ENCODE measurements at regions of chr7 and their contacts with region 1.

Region 1: GRCh38 chr7:44082541-44083207 is 344 bp upstream of the POLM start:
- DNase-seq: peak; percentile 94 to 99 (median 98)
- ATAC-seq: peak; percentile 93
- H3K4me3 ChIP-seq: peak overlapping the region; percentile 66
- H3K4me3 Mint-ChIP-seq: peak overlapping the region; percentile 95
- H3K27ac ChIP-seq: peak overlapping the region; percentile 37 to 68
- H3K27ac Mint-ChIP-seq: peak overlapping the region; percentile 80
- H3K4me1 ChIP-seq: peaks cover 28% of the 10 kb centered on the region
- H3K4me1 Mint-ChIP-seq: peaks cover 30% of the 10 kb centered on the region
- H3K27me3 ChIP-seq: no peaks in the 10 kb centered on the region
- H3K27me3 Mint-ChIP-seq: no peaks in the 10 kb centered on the region
- CTCF ChIP-seq: no peak

Region 2: GRCh38 chr7:43925984-43926797 is 156.5 kb before region 1 on chr7 and contains the start of gene UBE2D4:
- CTCF ChIA-PET with region 1: no interaction called
- POLR2A ChIA-PET with region 1: no interaction called
- intact Hi-C with region 1: loop called in 1 of 2 experiments (anchors 5 kb)
- DNase-seq: peak; percentile 80 to 93 (median 86)
- ATAC-seq: peak; percentile 85
- H3K4me3 ChIP-seq: peak within 1 kb of the TSS; percentile 67
- H3K4me3 Mint-ChIP-seq: peak within 1 kb of the TSS; percentile 95
- H3K27ac ChIP-seq: peak within 1 kb of the TSS; percentile 80 to 89
- H3K27ac Mint-ChIP-seq: peak within 1 kb of the TSS; percentile 97
- H3K4me1 ChIP-seq: peaks cover 33% of the 10 kb centered on the region
- H3K4me1 Mint-ChIP-seq: peaks cover 48% of the 10 kb centered on the region
- H3K27me3 ChIP-seq: no peaks in the 10 kb centered on the region
- H3K27me3 Mint-ChIP-seq: no peaks in the 10 kb centered on the region
- CTCF ChIP-seq: no peak
- total RNA-seq, gene UBE2D4: 6.1 to 7.8 TPM

Region 3: DNA sequence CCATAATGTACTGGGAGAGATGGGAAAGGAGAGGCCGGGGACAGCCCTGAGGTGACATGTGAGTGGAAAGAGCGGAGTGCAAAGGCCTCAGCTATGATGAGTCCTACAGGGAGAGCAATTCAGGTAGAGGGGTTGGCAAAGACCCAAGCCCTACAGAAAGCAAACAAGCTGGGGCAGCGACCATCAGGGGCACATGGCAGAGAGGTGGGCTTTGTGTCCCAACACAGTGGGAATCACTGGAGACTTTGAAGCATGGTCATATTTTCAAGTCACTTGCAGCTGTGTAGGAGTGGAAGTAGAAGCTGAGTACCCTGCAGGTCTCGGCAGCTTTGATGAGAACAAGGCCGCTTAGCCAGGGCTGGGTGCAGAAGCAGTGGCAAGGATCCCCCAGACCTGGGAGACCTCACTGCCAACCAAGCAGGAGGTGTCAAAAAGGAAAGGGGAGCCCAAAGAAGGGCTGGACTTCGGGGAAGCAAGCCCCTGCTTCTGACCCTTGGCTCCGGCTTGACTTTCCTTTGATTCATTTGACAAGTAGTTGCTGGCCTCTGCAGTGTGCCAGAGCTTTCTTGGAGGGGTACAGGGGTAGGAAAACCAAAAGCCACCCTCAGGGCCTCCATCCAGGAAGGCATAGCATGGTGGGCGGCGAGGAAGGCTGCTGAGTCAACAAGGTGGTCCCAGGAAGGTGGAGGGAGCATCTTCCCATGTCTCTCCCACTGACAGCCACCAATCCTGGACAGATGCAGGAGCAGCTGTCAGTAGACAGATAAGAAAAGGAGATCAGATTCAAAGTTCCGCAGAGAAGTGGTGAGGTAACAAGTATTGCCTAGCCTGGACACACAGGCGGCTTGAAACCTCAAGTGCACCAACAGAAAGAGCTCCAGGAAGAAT is 15.4 kb before region 1 on chr7:
- CTCF ChIA-PET with region 1: interaction called, 4 read pairs
- POLR2A ChIA-PET with region 1: interaction called, 14 read pairs
- intact Hi-C with region 1: no loop called
- DNase-seq: peak in 1 of 14 experiments; percentile 31
- ATAC-seq: no peak
- H3K4me3 ChIP-seq: no peak overlapping the region
- H3K4me3 Mint-ChIP-seq: no peak overlapping the region
- H3K27ac ChIP-seq: no peak overlapping the region
- H3K27ac Mint-ChIP-seq: no peak overlapping the region
- H3K4me1 ChIP-seq: peaks cover 30% of the 10 kb centered on the region
- H3K4me1 Mint-ChIP-seq: peaks cover 32% of the 10 kb centered on the region
- H3K27me3 ChIP-seq: no peaks in the 10 kb centered on the region
- H3K27me3 Mint-ChIP-seq: no peaks in the 10 kb centered on the region
- CTCF ChIP-seq: no peak

Region 4: GRCh38 chr7:44123190-44124003 is 40.7 kb after region 1 on chr7 and contains the start of gene POLD2:
- CTCF ChIA-PET with region 1: no interaction called
- POLR2A ChIA-PET with region 1: interaction called, 3 read pairs
- intact Hi-C with region 1: loop called in 1 of 2 experiments (anchors 1 kb)
- DNase-seq: peak; percentile 91 to 98 (median 97)
- ATAC-seq: peak; percentile 98
- H3K4me3 ChIP-seq: peak within 1 kb of the TSS; percentile 82
- H3K4me3 Mint-ChIP-seq: peak within 1 kb of the TSS; percentile 92
- H3K27ac ChIP-seq: peak within 1 kb of the TSS; percentile 33 to 67
- H3K27ac Mint-ChIP-seq: peak within 1 kb of the TSS; percentile 65
- H3K4me1 ChIP-seq: peaks cover 27% of the 10 kb centered on the region
- H3K4me1 Mint-ChIP-seq: peaks cover 17% of the 10 kb centered on the region
- H3K27me3 ChIP-seq: no peaks in the 10 kb centered on the region
- H3K27me3 Mint-ChIP-seq: no peaks in the 10 kb centered on the region
- CTCF ChIP-seq: no peak
- total RNA-seq, gene POLD2: 45.2 to 48.3 TPM

Region 5: GRCh38 chr7:44200647-44201461 is 118.2 kb after region 1 on chr7 and contains the start of gene YKT6:
- CTCF ChIA-PET with region 1: no interaction called
- POLR2A ChIA-PET with region 1: interaction called, 5 read pairs
- intact Hi-C with region 1: loop called in 1 of 2 experiments (anchors 2 kb)
- DNase-seq: peak; percentile 89 to 97 (median 92)
- ATAC-seq: peak; percentile 98
- H3K4me3 ChIP-seq: peak within 1 kb of the TSS; percentile 89
- H3K4me3 Mint-ChIP-seq: peak within 1 kb of the TSS; percentile 83
- H3K27ac ChIP-seq: peak within 1 kb of the TSS in 1 of 2 donors; percentile 56
- H3K27ac Mint-ChIP-seq: peak within 1 kb of the TSS; percentile 62
- H3K4me1 ChIP-seq: peaks cover 15% of the 10 kb centered on the region
- H3K4me1 Mint-ChIP-seq: peaks cover 40% of the 10 kb centered on the region
- H3K27me3 ChIP-seq: peaks cover 0 to 7% of the 10 kb centered on the region in 2 experiments
- H3K27me3 Mint-ChIP-seq: peaks cover 13% of the 10 kb centered on the region
- CTCF ChIP-seq: peak; percentile 65
- total RNA-seq, gene YKT6: 85.0 to 86.4 TPM